MCF 10A (cell line): ENCODE measurements at regions of chr12 and their contacts with region 1.

Region 1: GRCh38 chr12:53098982-53099651 is 1.6 kb downstream of the IGFBP6 start:
- DNase-seq: peak; percentile 92
- H3K4me3 Mint-ChIP-seq: peak overlapping the region; percentile 73
- H3K27ac Mint-ChIP-seq: peak overlapping the region; percentile 76
- H3K4me1 Mint-ChIP-seq: peaks cover 26% of the 10 kb centered on the region
- H3K27me3 Mint-ChIP-seq: no peaks in the 10 kb centered on the region
- CTCF ChIP-seq: peak; percentile 92

Region 2: GRCh38 chr12:53054112-53054833 is 44.8 kb before region 1 on chr12:
- CTCF ChIA-PET with region 1: interaction called, 267 read pairs
- POLR2A ChIA-PET with region 1: interaction called, 10 read pairs
- intact Hi-C with region 1: no loop called
- DNase-seq: peak; percentile 98
- H3K4me3 Mint-ChIP-seq: peak overlapping the region; percentile 80
- H3K27ac Mint-ChIP-seq: peak overlapping the region; percentile 97
- H3K4me1 Mint-ChIP-seq: peaks cover 32% of the 10 kb centered on the region
- H3K27me3 Mint-ChIP-seq: no peaks in the 10 kb centered on the region
- CTCF ChIP-seq: no peak